ENCODE measurements at regions of chr13 and their contacts with region 1.

Region 1: DNA sequence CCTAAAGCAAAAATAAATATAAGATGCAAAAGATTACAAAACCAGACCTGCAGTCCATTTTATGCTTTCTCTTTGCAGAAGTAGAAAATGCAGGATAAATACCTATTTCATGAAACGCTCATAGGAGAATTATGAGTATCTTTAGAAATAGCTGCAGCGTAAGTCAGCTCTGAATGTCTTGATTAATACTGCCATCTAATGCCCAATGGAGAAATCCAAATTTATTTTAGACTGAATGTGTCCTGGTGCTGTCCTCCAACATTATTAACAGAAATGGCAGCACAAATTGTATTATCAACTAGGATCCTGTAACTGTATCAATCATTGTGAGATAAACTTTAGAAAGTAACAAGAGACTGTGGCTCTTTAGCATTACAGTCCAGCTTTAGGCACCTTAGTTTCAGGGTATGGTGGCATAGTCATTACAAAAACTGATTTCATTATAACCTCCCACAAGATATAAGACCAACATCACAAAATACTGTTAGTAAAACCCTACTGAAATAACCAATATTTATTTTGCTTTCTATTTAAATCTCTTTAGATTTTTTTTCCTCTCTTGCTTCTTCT is 162.1 kb upstream of the MIR17HG start:
- DNase-seq: no peak
- ATAC-seq: no peak

Region 2: DNA sequence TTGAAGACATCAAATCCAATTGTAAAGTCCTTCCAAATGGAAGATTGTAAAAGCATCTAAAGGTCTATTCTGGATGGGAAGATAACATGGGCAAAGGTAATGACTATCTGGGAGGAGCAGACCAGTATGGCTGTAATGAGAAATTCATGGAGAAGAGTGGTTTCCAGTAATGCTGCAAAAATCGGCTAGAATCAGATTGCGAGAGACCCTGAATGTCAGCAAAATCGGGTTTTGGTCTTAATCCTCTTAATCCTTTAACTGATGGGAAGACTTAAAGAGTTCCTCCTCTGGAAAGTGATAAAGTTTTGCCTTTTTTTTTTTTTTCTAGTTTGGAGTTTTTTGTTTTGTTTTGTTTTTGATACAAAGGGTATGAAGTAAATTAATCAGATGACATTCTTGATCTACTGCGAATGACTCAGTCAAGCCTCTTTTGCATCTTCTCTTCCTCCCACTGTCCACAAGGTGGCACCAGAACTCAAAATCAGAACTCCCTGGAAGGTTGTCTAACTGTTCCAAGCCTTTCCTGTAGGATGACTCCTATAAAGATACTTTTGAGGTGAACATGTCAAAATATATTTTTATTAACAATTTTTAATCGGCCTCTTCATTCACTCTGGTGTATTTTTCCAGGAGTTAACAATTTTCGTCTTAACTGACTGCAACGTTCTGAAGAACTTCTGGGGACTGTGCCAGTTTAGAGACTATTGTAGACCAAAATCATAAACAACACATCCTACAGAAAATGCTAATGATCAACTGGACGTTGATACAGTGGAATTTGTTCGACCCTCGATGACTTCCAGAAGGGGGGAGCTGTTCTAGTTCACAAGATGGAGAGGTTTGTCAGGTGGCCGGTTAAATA is 51.2 kb before region 1 on chr13:
- intact Hi-C with region 1: loop called (anchors 2 kb)
- DNase-seq: no peak
- ATAC-seq: peak; percentile 64

Measured in Right ventricle myocardium inferior (tissue), 1 donor.